ENCODE measurements at regions of chr20 and their contacts with region 1.

Region 1: DNA sequence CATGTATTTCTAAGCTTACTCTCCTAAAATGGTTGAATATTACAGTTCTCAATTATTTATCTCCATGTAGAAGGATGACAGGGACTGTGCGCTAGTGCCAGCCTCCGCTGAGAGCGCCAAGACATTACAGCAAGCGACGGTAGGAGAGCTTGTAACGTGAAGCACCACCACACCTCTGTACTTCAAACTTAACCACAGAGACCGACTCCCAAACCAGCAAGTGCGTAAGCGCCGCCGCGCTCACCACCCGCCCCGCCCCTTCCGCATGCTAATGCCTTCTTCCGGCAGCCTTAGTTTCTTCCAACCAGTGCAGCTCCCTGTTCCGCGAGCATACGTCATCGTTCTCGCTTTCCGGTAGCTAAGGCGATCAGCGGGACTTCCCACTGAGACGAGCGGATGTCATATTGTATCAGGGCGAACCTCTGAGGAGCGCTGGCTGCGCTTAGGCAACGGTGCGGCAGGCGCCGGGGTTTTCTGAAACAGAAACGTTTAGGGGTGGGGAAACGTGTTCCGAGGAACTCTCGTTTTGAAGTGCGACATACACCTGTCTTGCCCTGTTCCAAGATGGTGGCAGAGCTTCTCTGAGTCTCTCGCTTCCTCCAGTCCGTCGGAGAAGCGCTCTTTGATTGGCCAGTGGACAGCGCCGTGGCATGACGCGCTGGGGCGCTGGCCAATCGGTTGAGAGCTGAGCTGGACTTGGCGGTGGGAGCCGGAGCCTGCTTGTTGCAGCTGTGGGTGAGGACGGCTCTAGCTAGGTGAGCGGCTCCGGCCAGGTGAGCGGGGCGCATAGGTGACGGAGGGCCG is at the start of gene SEC23B:
- DNase-seq: peak; percentile 99
- ATAC-seq: peak; percentile 97
- H3K4me3 ChIP-seq: peak within 1 kb of the TSS; percentile 93
- H3K27ac ChIP-seq: peak within 1 kb of the TSS; percentile 87
- H3K4me1 ChIP-seq: peaks cover 13% of the 10 kb centered on the region
- H3K27me3 ChIP-seq: no peaks in the 10 kb centered on the region
- CTCF ChIP-seq: no peak
- total RNA-seq, gene SEC23B: 82.1 and 89.5 TPM in 2 replicates

Region 2: DNA sequence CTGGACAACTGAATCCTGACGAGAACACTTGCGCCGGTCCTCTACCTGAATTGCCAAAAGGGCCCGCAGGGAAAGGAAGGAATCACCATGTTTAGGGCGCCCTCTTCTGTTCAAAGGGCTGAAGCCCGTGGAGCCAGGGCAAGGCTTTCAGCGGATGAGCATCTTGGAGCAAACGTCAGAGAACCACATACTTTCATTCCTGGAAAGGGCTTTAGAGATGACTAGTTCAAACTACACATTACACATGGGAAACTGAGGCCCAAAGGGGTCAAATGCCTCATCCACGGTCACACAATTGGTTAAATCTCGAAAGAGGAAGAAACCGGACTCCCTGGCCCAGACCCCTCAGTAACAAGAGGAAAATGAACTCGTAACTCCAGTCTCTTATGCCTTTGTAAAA is 230.6 kb before region 1 on chr20:
- CTCF ChIA-PET with region 1: no interaction called
- POLR2A ChIA-PET with region 1: no interaction called
- intact Hi-C with region 1: no loop called
- DNase-seq: peak; percentile 95
- ATAC-seq: peak; percentile 96
- H3K4me3 ChIP-seq: peak overlapping the region; percentile 41; the same call in 1 of the 2 replicates
- H3K27ac ChIP-seq: no peak overlapping the region
- H3K4me1 ChIP-seq: peaks cover 9% of the 10 kb centered on the region; the same call in 1 of the 2 replicates
- H3K27me3 ChIP-seq: no peaks in the 10 kb centered on the region
- CTCF ChIP-seq: peak; percentile 97

Region 3: DNA sequence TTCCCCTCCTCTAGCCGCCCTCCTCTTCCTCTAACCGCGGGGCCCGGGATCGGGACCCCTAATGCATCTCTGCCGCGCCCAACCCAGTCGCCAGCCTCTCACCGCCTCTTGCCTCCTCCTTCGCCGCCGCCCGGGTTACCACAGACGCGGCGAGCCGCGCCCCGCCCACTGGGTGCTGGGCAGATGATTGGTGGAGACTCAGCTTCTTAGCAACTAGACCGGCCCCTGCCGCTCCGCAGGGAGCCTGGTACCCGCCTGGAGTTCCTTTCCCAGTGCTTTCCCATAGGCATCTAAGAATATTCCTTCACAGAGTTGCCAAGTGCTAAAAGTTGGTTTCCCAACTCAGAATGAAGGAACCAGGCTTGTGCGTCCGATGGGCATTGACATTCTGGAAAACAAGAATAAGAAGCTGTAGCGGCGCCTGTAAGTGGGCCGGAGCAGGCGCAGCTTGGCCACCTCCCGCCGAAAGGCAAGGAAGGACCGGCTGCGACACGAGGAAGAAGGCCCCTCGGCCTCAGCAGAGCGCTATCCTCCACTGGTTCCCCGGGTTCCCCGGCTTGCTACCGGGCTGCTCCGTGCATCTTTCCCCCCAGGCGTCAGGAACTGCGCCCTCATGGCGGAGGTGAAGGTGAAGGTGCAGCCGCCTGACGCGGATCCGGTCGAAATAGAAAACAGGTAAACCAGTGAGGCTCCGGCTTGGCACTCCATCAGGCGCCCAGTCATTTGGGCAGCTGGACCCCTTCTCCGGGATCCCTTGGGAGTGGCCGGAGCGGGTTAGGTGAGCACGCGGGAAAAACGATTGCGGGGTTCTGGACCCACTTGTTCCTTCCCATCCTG is 40.3 kb before region 1 on chr20 and contains the starts of genes DZANK1 and POLR3F:
- CTCF ChIA-PET with region 1: no interaction called
- POLR2A ChIA-PET with region 1: interaction called, 13 read pairs
- intact Hi-C with region 1: loop called (anchors 1 kb)
- DNase-seq: peak; percentile 98
- ATAC-seq: peak; percentile 99
- H3K4me3 ChIP-seq: peak within 1 kb of the TSS; percentile 90
- H3K27ac ChIP-seq: peak within 1 kb of the TSS; percentile 86
- H3K4me1 ChIP-seq: peaks cover 16% of the 10 kb centered on the region
- H3K27me3 ChIP-seq: no peaks in the 10 kb centered on the region
- CTCF ChIP-seq: no peak
- total RNA-seq, gene DZANK1: 2.6 and 3.2 TPM in 2 replicates
- total RNA-seq, gene POLR3F: 28.2 and 31.8 TPM in 2 replicates

Region 4: GRCh38 chr20:18496740-18497592 is 10.5 kb before region 1 on chr20 and contains the start of gene RBBP9:
- CTCF ChIA-PET with region 1: no interaction called
- POLR2A ChIA-PET with region 1: interaction called, 18 read pairs
- intact Hi-C with region 1: no loop called
- DNase-seq: peak; percentile 89
- ATAC-seq: peak; percentile 100
- H3K4me3 ChIP-seq: peak within 1 kb of the TSS; percentile 92
- H3K27ac ChIP-seq: no peak within 1 kb of the TSS
- H3K4me1 ChIP-seq: peaks cover 15% of the 10 kb centered on the region
- H3K27me3 ChIP-seq: no peaks in the 10 kb centered on the region
- CTCF ChIP-seq: no peak
- total RNA-seq, gene RBBP9: 17.7 and 22.8 TPM in 2 replicates

Region 5: DNA sequence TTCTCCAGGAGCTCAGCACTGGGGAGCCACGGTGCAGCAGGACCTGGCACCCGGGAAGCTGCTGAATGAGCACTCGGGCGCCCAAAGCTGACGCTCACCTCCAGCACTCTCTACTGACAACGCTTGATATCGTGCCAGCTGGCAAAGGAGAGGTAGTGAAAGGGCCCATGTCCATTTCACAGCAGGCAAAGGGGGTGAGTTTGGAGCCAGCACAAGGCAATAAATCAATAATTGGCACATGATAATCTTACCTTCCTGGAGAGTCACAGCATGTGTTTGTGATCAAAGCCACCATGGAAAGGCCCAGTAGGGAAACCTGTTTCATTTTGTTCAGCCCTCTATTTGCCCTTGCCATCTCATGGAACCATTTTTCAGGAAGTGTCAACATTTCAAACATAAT is 36.5 kb after region 1 on chr20:
- CTCF ChIA-PET with region 1: no interaction called
- POLR2A ChIA-PET with region 1: interaction called, 6 read pairs
- intact Hi-C with region 1: loop called (anchors 2 kb)
- DNase-seq: peak; percentile 53
- ATAC-seq: no peak; the same call in 1 of the 2 replicates
- H3K4me3 ChIP-seq: no peak overlapping the region
- H3K27ac ChIP-seq: peak overlapping the region; percentile 82
- H3K4me1 ChIP-seq: peaks cover 46% of the 10 kb centered on the region
- H3K27me3 ChIP-seq: no peaks in the 10 kb centered on the region
- CTCF ChIP-seq: no peak

Region 6: DNA sequence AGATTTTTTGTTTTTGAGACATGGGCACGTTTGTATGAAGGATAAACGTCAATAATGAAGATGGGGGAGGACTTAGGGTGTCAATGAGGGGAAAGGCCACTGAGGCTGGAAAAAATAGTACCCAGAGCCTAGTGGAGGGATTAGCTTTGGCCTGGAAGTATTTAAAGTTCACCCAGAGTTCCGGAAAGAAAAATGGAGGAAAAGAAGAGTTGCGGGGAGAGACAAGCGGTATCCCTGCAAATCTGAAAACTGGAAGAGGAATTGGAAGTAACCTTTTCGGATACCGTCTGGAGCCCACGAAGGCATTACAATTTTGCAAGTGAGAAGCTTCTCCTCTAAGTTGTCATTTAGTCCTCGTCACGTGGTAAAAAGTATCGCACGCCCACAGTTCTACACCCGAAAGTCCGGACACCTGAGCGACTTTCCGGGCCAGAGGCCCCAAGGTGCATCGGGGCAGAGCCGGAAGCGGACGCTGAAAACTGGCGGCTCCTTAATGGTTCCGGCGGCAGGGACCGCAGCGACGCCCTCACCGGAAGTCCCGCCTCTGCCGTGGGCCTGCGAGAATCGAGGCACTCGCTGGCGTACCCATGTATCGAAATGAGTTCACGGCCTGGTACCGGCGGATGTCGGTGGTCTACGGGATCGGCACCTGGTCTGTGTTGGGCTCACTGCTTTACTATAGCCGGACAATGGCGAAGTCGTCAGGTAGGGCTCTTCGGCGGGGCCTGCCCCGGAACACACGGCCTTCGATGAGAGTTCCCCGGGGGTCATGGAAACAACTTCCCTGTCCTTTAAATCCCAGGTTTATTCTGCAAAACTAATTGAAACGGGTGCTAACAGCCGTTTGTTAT is 59.7 kb after region 1 on chr20 and contains the start of gene SMIM26:
- CTCF ChIA-PET with region 1: no interaction called
- POLR2A ChIA-PET with region 1: interaction called, 15 read pairs
- intact Hi-C with region 1: loop called (anchors 1 kb)
- DNase-seq: peak; percentile 98
- ATAC-seq: peak; percentile 99
- H3K4me3 ChIP-seq: peak within 1 kb of the TSS; percentile 94
- H3K27ac ChIP-seq: peak within 1 kb of the TSS; percentile 36
- H3K4me1 ChIP-seq: peaks cover 7% of the 10 kb centered on the region
- H3K27me3 ChIP-seq: no peaks in the 10 kb centered on the region
- CTCF ChIP-seq: no peak
- total RNA-seq, gene SMIM26: 76.7 and 83.6 TPM in 2 replicates

Region 7: GRCh38 chr20:18625907-18626655 is 118.7 kb after region 1 on chr20:
- CTCF ChIA-PET with region 1: no interaction called
- POLR2A ChIA-PET with region 1: no interaction called
- intact Hi-C with region 1: no loop called
- DNase-seq: no peak
- ATAC-seq: no peak
- H3K4me3 ChIP-seq: no peak overlapping the region
- H3K27ac ChIP-seq: no peak overlapping the region
- H3K4me1 ChIP-seq: peaks cover 2% of the 10 kb centered on the region
- H3K27me3 ChIP-seq: no peaks in the 10 kb centered on the region
- CTCF ChIP-seq: no peak

Region 8: GRCh38 chr20:18657575-18657974 is 150.2 kb after region 1 on chr20:
- CTCF ChIA-PET with region 1: no interaction called
- POLR2A ChIA-PET with region 1: no interaction called
- intact Hi-C with region 1: no loop called
- DNase-seq: no peak
- ATAC-seq: 0 out of 2 replicates have a peak, but pooled peaks have one; percentile 13
- H3K4me3 ChIP-seq: no peak overlapping the region
- H3K27ac ChIP-seq: no peak overlapping the region
- H3K4me1 ChIP-seq: no peaks in the 10 kb centered on the region
- H3K27me3 ChIP-seq: no peaks in the 10 kb centered on the region
- CTCF ChIP-seq: no peak